Ascending aorta (tissue), 2 donors: ENCODE measurements at regions of chr10 and their contacts with region 1.

Region 1: DNA sequence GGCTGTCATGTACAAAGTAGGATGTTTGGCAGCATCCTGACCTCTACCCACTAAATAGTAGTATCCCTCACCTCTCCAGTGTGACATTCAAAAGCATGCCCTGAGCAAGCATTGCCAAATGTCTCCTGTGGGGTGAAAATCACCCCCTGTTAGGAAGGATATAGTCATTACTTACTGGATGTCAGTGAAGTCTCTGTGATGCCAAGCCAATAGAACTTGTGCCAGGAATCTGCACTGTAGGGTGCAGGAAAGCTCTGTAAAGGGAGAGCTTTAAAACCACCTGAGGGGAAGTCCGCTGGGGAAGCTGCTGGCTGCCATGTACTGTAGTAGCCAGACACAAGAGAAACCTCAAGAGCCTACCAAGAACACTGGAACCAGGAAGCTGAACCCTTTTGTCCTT is 170.7 kb upstream of the DKK1 start:
- DNase-seq: no peak
- H3K4me3 ChIP-seq: no peak overlapping the region
- H3K27ac ChIP-seq: no peak overlapping the region
- H3K4me1 ChIP-seq: peaks cover 0 to 7% of the 10 kb centered on the region in 2 donors
- H3K27me3 ChIP-seq: no peaks in the 10 kb centered on the region
- CTCF ChIP-seq: no peak

Region 2: GRCh38 chr10:51773681-51774080 is 369.7 kb before region 1 on chr10:
- intact Hi-C with region 1: no loop called
- DNase-seq: no peak
- H3K4me3 ChIP-seq: no peak overlapping the region
- H3K27ac ChIP-seq: peak overlapping the region; percentile 19 to 44
- H3K4me1 ChIP-seq: peaks cover 0 to 17% of the 10 kb centered on the region in 2 donors
- H3K27me3 ChIP-seq: no peaks in the 10 kb centered on the region
- CTCF ChIP-seq: no peak

Region 3: DNA sequence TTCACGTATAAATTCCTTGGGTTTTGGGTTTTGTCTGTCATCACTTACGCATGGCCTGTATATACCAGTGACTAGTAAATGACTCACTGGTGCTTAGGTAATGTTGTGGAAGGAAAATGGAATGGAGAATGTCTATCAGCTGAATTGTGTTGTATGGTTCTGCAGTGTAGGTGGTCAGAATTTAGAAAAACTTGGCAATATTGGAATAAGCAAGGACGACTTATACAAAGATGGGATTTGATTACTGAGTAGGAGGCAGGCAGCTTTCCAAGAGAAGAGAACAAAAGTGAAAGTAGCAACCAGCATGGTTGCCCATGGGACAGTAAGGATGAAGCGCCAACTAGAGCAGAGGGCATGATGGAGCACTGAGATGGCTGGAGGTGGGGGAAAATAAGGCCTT is 275.4 kb before region 1 on chr10:
- intact Hi-C with region 1: no loop called
- DNase-seq: no peak
- H3K4me3 ChIP-seq: no peak overlapping the region
- H3K27ac ChIP-seq: no peak overlapping the region
- H3K4me1 ChIP-seq: no peaks in the 10 kb centered on the region
- H3K27me3 ChIP-seq: no peaks in the 10 kb centered on the region
- CTCF ChIP-seq: no peak

Region 4: DNA sequence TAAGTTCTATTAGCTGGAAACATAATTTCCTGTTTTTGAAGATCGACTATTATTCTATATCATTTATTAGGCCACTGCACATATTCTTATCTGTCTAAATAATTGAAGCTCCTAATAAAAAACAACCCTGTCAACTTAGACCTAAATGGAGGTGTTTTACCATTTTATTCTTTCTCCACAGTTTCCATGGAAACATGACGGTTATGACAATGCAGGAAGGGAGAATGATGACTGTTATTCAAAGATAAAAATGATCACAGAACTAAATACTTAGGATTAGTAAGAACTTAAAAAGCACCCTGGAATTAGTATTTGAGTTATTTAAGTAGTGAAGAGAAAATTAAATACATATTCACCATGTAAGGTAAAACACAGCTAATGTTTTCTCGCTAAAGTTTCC is 50.9 kb after region 1 on chr10:
- intact Hi-C with region 1: loop called (anchors 5 kb)
- DNase-seq: no peak
- H3K4me3 ChIP-seq: no peak overlapping the region
- H3K27ac ChIP-seq: no peak overlapping the region
- H3K4me1 ChIP-seq: peaks cover 0 to 3% of the 10 kb centered on the region in 2 donors
- H3K27me3 ChIP-seq: no peaks in the 10 kb centered on the region
- CTCF ChIP-seq: no peak